CD14-positive monocyte (primary cell): ENCODE measurements at regions of chr12 and their contacts with region 1.

Region 1: DNA sequence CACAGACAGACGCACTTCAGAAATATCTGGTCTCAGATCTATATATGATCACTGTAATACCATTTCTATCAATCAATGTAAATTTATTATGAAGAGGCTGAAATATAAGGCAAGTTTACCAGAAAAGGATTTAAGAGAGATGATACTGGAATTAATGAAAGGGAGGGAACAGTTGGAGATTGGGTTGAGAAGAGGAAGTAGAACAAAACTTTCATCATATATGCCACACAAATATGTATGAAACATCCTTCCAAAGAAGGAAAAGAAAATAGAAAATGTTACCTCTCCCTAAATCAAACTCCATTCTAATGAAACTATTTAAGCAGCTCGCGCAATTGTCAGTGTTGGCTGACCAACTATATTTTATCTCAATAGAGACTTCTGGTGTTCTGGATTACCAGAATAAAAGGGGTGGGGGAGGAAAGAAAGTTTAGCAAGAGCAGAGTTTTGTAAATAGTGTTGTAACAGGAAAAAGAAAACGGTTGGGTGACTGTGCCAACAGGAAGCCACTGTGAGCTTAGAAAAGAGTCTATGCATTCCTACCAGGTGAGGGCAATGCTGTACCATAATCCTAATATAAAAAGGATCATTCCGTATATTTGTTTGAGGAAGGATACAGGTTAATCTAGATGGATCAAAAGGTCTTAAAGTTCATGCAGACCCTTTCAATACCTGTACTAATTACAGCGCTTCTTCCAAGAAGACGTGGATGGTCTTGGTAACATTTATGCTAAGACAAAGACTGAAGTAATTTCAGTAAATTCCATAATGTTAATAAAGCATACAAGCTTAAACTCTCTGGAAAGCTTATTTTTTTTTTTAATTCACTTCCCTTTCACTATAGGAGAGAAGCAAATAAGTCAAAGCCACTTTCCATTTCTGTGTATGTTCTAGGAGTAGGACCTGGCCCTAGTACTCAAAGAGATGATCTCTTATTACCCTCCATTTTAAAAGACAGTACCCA is 14.5 kb upstream of the LLPH start:
- DNase-seq: peak; percentile 69 to 90 (median 87)
- H3K4me3 ChIP-seq: peak overlapping the region; percentile 15 to 56 (median 35)
- H3K4me3 Mint-ChIP-seq: peak overlapping the region; percentile 52 to 78
- H3K27ac ChIP-seq: peak overlapping the region in 1 of 2 donors; percentile 83
- H3K27ac Mint-ChIP-seq: peak overlapping the region; percentile 86 to 98 (median 96)
- H3K4me1 ChIP-seq: peaks cover 41 to 66% of the 10 kb centered on the region in 2 donors
- H3K4me1 Mint-ChIP-seq: peaks cover 58% of the 10 kb centered on the region
- H3K27me3 ChIP-seq: no peaks in the 10 kb centered on the region
- H3K27me3 Mint-ChIP-seq: no peaks in the 10 kb centered on the region
- CTCF ChIP-seq: peak; percentile 79

Region 2: DNA sequence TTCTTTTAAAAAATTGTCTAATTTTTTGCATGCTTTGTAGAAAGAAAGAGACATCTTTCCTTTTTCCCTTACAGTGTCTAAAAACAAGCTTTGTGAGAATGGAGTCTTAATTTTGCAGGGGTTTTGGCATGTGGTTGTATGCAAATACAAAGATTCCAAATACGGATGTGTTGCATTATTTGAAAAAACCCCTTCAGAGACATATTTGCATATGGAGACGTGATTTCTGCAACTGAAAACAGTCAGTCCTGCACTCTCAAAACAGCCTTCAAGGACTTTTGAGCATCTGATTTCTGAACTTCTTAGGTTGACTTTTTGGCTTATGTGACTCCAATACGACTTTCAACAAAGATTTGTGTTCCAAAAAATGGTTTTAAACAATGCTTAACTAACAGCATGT is 51.7 kb after region 1 on chr12:
- intact Hi-C with region 1: loop called in 1 of 2 experiments (anchors 10 kb)
- DNase-seq: peak; percentile 57 to 77 (median 73)
- H3K4me3 ChIP-seq: peak overlapping the region in 1 of 3 experiments; percentile 52
- H3K4me3 Mint-ChIP-seq: peak overlapping the region; percentile 32 to 40
- H3K27ac ChIP-seq: peak overlapping the region in 1 of 2 donors; percentile 84
- H3K27ac Mint-ChIP-seq: peak overlapping the region; percentile 73 to 93 (median 82)
- H3K4me1 ChIP-seq: peaks cover 67 to 79% of the 10 kb centered on the region in 2 donors
- H3K4me1 Mint-ChIP-seq: peaks cover 75% of the 10 kb centered on the region
- H3K27me3 ChIP-seq: no peaks in the 10 kb centered on the region
- H3K27me3 Mint-ChIP-seq: no peaks in the 10 kb centered on the region
- CTCF ChIP-seq: no peak

Region 3: GRCh38 chr12:66235626-66236281 is 90.7 kb after region 1 on chr12:
- intact Hi-C with region 1: loop called in 1 of 2 experiments (anchors 10 kb)
- DNase-seq: no peak
- H3K4me3 ChIP-seq: peak overlapping the region; percentile 39 to 80 (median 75)
- H3K4me3 Mint-ChIP-seq: peak overlapping the region; percentile 72 to 84
- H3K27ac ChIP-seq: peak overlapping the region; percentile 60
- H3K27ac Mint-ChIP-seq: peak overlapping the region; percentile 88 to 96 (median 92)
- H3K4me1 ChIP-seq: peaks cover 62 to 67% of the 10 kb centered on the region in 2 donors
- H3K4me1 Mint-ChIP-seq: peaks cover 63% of the 10 kb centered on the region
- H3K27me3 ChIP-seq: no peaks in the 10 kb centered on the region
- H3K27me3 Mint-ChIP-seq: peaks cover 0 to 2% (median 0%) of the 10 kb centered on the region in 3 donors
- CTCF ChIP-seq: peak; percentile 59

Region 4: GRCh38 chr12:66301944-66302826 is 157.1 kb after region 1 on chr12 and contains the start of gene HELB:
- intact Hi-C with region 1: loop called in 1 of 2 experiments (anchors 10 kb)
- DNase-seq: peak; percentile 94 to 97 (median 96)
- H3K4me3 ChIP-seq: peak within 1 kb of the TSS; percentile 77 to 97 (median 92)
- H3K4me3 Mint-ChIP-seq: peak within 1 kb of the TSS; percentile 96 to 99
- H3K27ac ChIP-seq: peak within 1 kb of the TSS; percentile 74 to 89
- H3K27ac Mint-ChIP-seq: peak within 1 kb of the TSS; percentile 96 to 99 (median 99)
- H3K4me1 ChIP-seq: peaks cover 20 to 31% of the 10 kb centered on the region in 2 donors
- H3K4me1 Mint-ChIP-seq: peaks cover 34% of the 10 kb centered on the region
- H3K27me3 ChIP-seq: no peaks in the 10 kb centered on the region
- H3K27me3 Mint-ChIP-seq: peaks cover 0 to 2% (median under 1%) of the 10 kb centered on the region in 3 donors
- CTCF ChIP-seq: no peak
- polyA plus RNA-seq, gene HELB: 1.8 to 3.4 (median 3.0) TPM

Region 5: DNA sequence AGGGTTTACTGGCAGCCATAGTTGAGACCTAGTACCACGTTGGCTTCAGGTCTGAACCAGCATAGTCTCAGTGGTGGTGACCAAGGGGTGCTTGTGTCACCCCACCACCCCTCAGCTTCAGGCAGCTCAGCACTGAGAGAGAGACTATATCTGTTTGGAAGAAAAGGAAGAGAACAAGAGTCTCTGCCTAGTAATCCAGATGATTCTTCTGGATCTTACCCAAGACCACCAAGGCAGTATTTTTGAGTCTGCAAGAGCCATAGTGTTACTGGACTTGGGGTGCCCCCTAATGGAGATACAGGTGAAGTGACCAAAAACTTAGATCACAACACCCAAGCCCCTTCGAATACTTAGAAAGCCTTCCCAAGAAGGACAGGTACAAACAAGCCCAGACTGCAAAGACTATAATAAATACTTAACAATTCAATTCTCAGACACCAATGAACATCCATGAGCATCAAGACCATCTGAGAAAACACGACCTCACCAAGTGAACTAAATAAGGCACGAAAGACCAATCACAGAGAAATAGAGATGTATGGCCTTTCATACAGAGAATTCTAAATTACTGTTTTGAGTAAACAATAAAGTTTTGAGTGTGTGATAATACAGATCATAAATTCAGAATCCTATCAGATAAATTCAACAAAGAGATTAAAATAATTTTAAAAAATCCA is 264.3 kb after region 1 on chr12:
- intact Hi-C with region 1: loop called in 1 of 2 experiments (anchors 10 kb)
- DNase-seq: peak; percentile 29 to 58 (median 51)
- H3K4me3 ChIP-seq: no peak overlapping the region
- H3K4me3 Mint-ChIP-seq: no peak overlapping the region
- H3K27ac ChIP-seq: peak overlapping the region in 1 of 2 donors; percentile 60
- H3K27ac Mint-ChIP-seq: peak overlapping the region in 6 of 7 donors; percentile 12 to 72 (median 40)
- H3K4me1 ChIP-seq: peaks cover 28 to 30% of the 10 kb centered on the region in 2 donors
- H3K4me1 Mint-ChIP-seq: peaks cover 33% of the 10 kb centered on the region
- H3K27me3 ChIP-seq: no peaks in the 10 kb centered on the region
- H3K27me3 Mint-ChIP-seq: peaks cover 0 to 3% (median 0%) of the 10 kb centered on the region in 3 donors
- CTCF ChIP-seq: peak; percentile 86

Region 6: GRCh38 chr12:66573605-66574004 is 428.5 kb after region 1 on chr12:
- intact Hi-C with region 1: no loop called
- DNase-seq: no peak
- H3K4me3 ChIP-seq: no peak overlapping the region
- H3K4me3 Mint-ChIP-seq: no peak overlapping the region
- H3K27ac ChIP-seq: no peak overlapping the region
- H3K27ac Mint-ChIP-seq: no peak overlapping the region
- H3K4me1 ChIP-seq: no peaks in the 10 kb centered on the region
- H3K4me1 Mint-ChIP-seq: no peaks in the 10 kb centered on the region
- H3K27me3 ChIP-seq: no peaks in the 10 kb centered on the region
- H3K27me3 Mint-ChIP-seq: peaks cover 0 to 2% (median 0%) of the 10 kb centered on the region in 3 donors
- CTCF ChIP-seq: no peak

Region 7: GRCh38 chr12:66693901-66694675 is 549.0 kb after region 1 on chr12:
- intact Hi-C with region 1: loop called in 1 of 2 experiments (anchors 10 kb)
- DNase-seq: peak; percentile 45 to 63 (median 58)
- H3K4me3 ChIP-seq: no peak overlapping the region
- H3K4me3 Mint-ChIP-seq: no peak overlapping the region
- H3K27ac ChIP-seq: no peak overlapping the region
- H3K27ac Mint-ChIP-seq: peak overlapping the region in 1 of 7 donors; percentile 31
- H3K4me1 ChIP-seq: peaks cover 23 to 30% of the 10 kb centered on the region in 2 donors
- H3K4me1 Mint-ChIP-seq: peaks cover 32% of the 10 kb centered on the region
- H3K27me3 ChIP-seq: no peaks in the 10 kb centered on the region
- H3K27me3 Mint-ChIP-seq: peaks cover 0 to 2% (median 0%) of the 10 kb centered on the region in 3 donors
- CTCF ChIP-seq: peak; percentile 79